Heart right ventricle (tissue), 16 donors: ENCODE measurements at regions of chr17 and their contacts with region 1.

Region 1: GRCh38 chr17:4881761-4882555 is 17.4 kb upstream of the C17orf107 start:
- DNase-seq: peak; percentile 51 to 57
- ATAC-seq: peak; percentile 58 to 82 (median 74)
- H3K4me3 ChIP-seq: no peak overlapping the region
- H3K27ac ChIP-seq: no peak overlapping the region
- H3K4me1 ChIP-seq: peaks cover 0 to 19% (median 0%) of the 10 kb centered on the region in 9 donors
- H3K27me3 ChIP-seq: no peaks in the 10 kb centered on the region
- CTCF ChIP-seq: peak; percentile 54 to 94 (median 82)

Region 2: DNA sequence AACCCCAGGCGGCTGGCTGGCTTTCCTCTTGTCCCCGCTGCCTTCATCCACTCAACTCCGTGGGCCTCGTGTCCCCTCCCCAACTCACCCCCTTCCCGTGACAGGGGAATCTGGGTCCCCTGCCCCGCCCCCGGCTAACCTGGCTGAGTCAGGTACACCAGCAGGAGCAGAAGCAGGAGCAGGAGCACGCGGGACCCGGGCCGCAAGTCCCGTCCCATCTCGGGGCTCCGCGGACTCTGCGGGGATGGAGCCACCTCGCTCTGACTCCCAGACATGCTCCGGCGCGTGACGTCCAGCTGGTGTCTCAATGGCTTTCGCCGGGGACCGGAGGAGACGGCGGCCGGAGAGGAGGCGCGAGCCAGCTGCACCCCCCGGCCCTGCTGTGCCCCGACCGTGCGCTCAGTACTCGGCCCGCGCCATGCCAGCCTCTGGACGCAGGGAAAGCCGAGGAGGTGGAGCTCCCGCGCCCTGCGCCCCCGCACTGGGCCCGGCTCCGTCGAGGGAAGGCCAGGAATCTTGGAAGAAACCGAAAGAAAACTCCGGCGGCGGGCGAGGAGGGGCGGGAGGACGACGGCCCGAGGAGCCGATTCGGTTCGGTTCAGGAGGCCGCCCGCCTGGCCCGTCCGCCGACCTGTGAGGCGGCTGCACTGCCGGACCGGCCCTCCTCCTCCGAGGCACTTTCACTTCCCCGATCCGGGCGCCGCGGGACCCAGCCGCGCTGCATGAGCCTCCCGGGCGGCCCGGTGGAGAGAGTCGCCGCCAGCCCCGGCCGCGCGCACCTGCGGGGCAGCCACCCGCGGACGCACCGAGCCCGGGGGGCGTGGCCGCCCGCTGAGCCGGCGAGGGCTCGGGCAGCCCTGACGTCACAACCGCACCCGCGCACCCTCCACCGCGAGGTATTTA is 142.6 kb before region 1 on chr17 and contains the starts of genes CXCL16 and ZMYND15:
- intact Hi-C with region 1: loop called in 8 of 10 experiments (anchors 5 to 10 kb)
- DNase-seq: peak; percentile 52 to 58
- ATAC-seq: peak; percentile 52 to 76 (median 66)
- H3K4me3 ChIP-seq: peak within 1 kb of the TSS; percentile 50 to 95 (median 84)
- H3K27ac ChIP-seq: peak within 1 kb of the TSS in 8 of 10 donors; percentile 1 to 82 (median 71)
- H3K4me1 ChIP-seq: peaks cover 2 to 48% (median 13%) of the 10 kb centered on the region in 9 donors
- H3K27me3 ChIP-seq: peaks cover 0 to 41% (median 8%) of the 10 kb centered on the region in 7 donors
- CTCF ChIP-seq: no peak
- total RNA-seq, gene CXCL16: 2.8 to 29.6 (median 4.2) TPM
- total RNA-seq, gene ZMYND15: 0.15 to 2.1 (median 0.38) TPM in 9 of 10 donors, not detected in the other

Region 3: GRCh38 chr17:4806777-4807604 is 75.0 kb before region 1 on chr17 and contains the start of gene PLD2:
- intact Hi-C with region 1: loop called in 1 of 10 experiments (anchors 5 kb)
- DNase-seq: peak; percentile 87 to 89
- ATAC-seq: peak; percentile 97 to 99 (median 97)
- H3K4me3 ChIP-seq: peak within 1 kb of the TSS; percentile 46 to 99 (median 88)
- H3K27ac ChIP-seq: peak within 1 kb of the TSS; percentile 4 to 94 (median 89)
- H3K4me1 ChIP-seq: peaks cover 7 to 26% (median 18%) of the 10 kb centered on the region in 9 donors
- H3K27me3 ChIP-seq: no peaks in the 10 kb centered on the region
- CTCF ChIP-seq: no peak
- total RNA-seq, gene PLD2: 6.4 to 18.6 (median 10.4) TPM

Region 4: GRCh38 chr17:4833178-4833940 is 48.6 kb before region 1 on chr17 and contains the start of gene MINK1:
- intact Hi-C with region 1: loop called in 4 of 10 experiments (anchors 5 to 10 kb)
- DNase-seq: peak; percentile 85 to 93
- ATAC-seq: peak; percentile 96 to 98 (median 97)
- H3K4me3 ChIP-seq: peak within 1 kb of the TSS; percentile 67 to 99 (median 90)
- H3K27ac ChIP-seq: peak within 1 kb of the TSS; percentile 64 to 97 (median 92)
- H3K4me1 ChIP-seq: peaks cover 10 to 49% (median 46%) of the 10 kb centered on the region in 9 donors
- H3K27me3 ChIP-seq: no peaks in the 10 kb centered on the region
- CTCF ChIP-seq: no peak
- total RNA-seq, gene MINK1: 26.4 to 54.1 (median 33.5) TPM

Region 5: DNA sequence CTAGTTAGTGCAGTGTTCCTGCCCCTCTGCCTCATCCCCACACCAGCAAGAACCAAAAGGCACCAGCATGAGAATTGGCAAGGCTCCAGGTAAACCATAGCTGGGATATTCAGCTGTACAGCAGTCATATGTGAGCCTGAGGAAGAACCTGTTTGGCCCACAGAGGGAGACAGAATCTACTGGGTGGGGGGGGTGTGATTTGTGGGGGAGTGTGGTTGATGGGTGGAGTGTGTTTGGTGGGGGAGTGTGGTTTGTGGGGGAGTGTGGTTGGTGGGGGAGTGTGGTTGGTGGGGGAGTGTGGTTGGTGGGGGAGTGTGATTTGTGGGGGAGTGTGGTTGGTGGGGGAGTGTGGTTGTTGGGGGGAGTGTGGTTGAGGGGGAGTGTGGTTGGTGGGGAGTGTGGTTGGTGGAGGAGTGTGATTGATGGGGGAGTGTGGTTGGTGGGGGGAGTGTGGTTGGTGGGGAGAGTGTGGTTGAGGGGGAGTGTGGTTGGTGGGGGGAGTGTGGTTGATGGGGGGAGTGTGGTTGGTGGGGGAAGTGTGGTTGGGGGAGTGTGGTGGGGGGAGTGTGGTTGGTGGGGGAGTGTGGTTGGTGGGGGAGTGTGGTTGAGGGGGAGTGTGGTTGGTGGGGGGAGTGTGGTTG is 29.3 kb before region 1 on chr17:
- intact Hi-C with region 1: loop called in 2 of 10 experiments (anchors 5 kb)
- DNase-seq: no peak
- ATAC-seq: no peak
- H3K4me3 ChIP-seq: no peak overlapping the region
- H3K27ac ChIP-seq: no peak overlapping the region
- H3K4me1 ChIP-seq: peaks cover 0 to 62% (median 34%) of the 10 kb centered on the region in 9 donors
- H3K27me3 ChIP-seq: no peaks in the 10 kb centered on the region
- CTCF ChIP-seq: no peak